Activated CD4-positive, alpha-beta memory T cell treated with anti-CD3 and anti-CD28 coated beads for 36 hours (primary cell): ENCODE measurements at regions of chr11 and their contacts with region 1.

Region 1: DNA sequence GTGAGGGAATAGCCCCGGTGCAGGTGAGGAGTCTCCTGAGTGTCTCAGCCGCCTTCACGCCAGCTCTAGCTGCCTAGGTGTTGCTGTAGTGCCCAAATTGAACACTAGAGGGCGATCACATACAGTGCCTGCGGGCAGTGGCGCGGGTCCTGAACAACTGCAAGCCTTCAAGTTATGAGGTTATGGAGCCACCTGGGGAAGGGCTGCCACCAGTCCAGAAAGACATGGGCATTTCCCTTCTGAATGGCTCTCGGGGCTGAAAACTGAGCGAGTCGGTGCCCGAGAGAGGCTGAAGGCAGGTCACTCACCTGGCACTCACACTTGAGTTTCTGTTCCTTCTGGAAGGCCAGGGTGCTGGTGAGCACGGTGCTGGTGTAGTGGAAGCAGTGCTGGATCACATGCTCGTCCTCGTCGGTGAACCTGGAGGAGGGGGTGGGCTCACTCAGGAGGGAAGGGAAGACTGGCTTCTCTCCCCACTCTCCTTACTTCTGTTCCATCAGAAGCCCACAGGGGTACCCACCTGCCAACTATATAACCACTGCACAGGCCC is 88.4 kb downstream of the PDE2A start:
- DNase-seq: peak; percentile 76
- H3K4me3 Mint-ChIP-seq: peak overlapping the region; percentile 45
- H3K27ac Mint-ChIP-seq: no peak overlapping the region
- H3K4me1 Mint-ChIP-seq: peaks cover 26% of the 10 kb centered on the region
- H3K27me3 Mint-ChIP-seq: peaks cover 30% of the 10 kb centered on the region

Region 2: DNA sequence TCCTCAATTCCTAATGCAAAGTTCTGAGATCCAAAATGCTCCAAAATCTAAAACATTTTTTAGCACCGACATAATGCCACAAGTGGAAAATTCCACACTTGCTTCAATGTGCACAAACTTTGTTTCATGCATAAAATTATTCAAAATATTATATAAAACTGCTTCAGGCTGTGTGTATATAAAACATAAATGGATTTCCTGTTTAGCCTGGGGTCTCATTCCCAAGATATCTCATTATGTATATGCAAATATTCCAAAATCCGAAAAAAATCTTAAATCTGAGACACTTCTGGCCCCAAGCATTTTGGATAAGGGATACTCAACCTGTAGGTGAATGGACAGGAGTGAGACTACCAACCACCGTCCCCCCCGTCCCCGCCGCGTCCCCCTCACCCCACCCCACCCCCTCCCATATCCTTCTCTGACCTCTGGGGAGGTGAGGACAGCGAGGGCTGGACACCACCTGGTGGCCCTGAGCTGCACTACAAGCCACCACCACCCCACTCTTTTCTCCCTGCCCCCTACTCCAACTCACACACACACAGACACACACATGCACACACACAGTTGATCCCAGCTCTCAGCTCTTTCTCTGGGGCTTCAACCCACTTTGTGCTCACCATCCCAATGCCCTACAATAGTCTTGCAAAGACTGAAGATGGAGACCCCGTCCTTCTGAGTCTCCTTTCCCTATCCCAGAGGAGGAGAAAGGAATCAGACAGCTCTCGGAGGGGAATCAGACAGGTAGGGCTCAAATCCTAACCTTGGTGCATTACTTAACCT is 12.6 kb before region 1 on chr11:
- CTCF ChIA-PET with region 1: interaction called, 10 read pairs
- POLR2A ChIA-PET with region 1: no interaction called
- intact Hi-C with region 1: no loop called
- DNase-seq: peak; percentile 51
- H3K4me3 Mint-ChIP-seq: no peak overlapping the region
- H3K27ac Mint-ChIP-seq: no peak overlapping the region
- H3K4me1 Mint-ChIP-seq: peaks cover 9% of the 10 kb centered on the region
- H3K27me3 Mint-ChIP-seq: peaks cover 9% of the 10 kb centered on the region

Region 3: GRCh38 chr11:72642884-72643511 is 57.2 kb after region 1 on chr11:
- CTCF ChIA-PET with region 1: interaction called, 98 read pairs
- POLR2A ChIA-PET with region 1: interaction called, 4 read pairs
- intact Hi-C with region 1: loop called (anchors 1 kb)
- DNase-seq: peak; percentile 71
- H3K4me3 Mint-ChIP-seq: peak overlapping the region; percentile 11
- H3K27ac Mint-ChIP-seq: no peak overlapping the region
- H3K4me1 Mint-ChIP-seq: peaks cover 2% of the 10 kb centered on the region
- H3K27me3 Mint-ChIP-seq: peaks cover 1% of the 10 kb centered on the region

Region 4: DNA sequence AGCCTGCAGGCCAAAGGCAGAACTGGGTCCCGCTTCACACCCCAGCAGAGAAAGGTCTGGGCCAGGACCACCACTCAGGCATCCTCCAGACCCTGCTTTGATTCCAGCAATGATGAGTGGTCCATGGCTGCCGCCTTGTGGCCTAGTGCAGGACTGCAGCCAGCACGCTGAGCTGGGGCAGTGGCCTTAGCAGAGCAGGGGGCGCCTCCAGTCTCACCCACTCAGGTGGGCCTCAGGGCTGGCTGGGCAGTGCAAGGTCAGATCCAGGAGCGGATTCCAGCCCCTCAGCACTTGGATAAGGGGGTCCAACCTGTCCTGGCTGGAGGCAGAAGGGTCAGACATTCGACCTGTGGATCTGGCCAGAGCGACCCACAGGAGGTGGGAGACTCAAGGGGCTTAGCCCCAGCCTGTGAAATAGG is 98.0 kb after region 1 on chr11:
- CTCF ChIA-PET with region 1: interaction called, 155 read pairs
- POLR2A ChIA-PET with region 1: interaction called, 3 read pairs
- intact Hi-C with region 1: loop called (anchors 1 kb)
- DNase-seq: peak; percentile 79
- H3K4me3 Mint-ChIP-seq: no peak overlapping the region
- H3K27ac Mint-ChIP-seq: no peak overlapping the region
- H3K4me1 Mint-ChIP-seq: peaks cover 17% of the 10 kb centered on the region
- H3K27me3 Mint-ChIP-seq: peaks cover 4% of the 10 kb centered on the region